ENCODE measurements at regions of chr12 and their contacts with region 1.

Region 1: GRCh38 chr12:121802846-121803630 is 771 bp upstream of the SETD1B start:
- DNase-seq: peak; percentile 93
- ATAC-seq: peak; percentile 63
- H3K4me3 ChIP-seq: peak overlapping the region; percentile 71 to 80 (median 79)
- H3K27ac ChIP-seq: peak overlapping the region; percentile 99
- H3K4me1 ChIP-seq: peaks cover 41% of the 10 kb centered on the region
- H3K27me3 ChIP-seq: no peaks in the 10 kb centered on the region; a peak in 1 of 5 replicates
- CTCF ChIP-seq: peak; percentile 17; the same call in 1 of the 2 replicates
- EP300 ChIP-seq: peak; percentile 13 to 25; a peak in 1 of 4 replicates
- POLR2A ChIP-seq: peak in 1 of 2 experiments; percentile 97; a peak in 2 of 4 replicates
- RAD21 ChIP-seq: no peak; the same call in 1 of the 2 replicates

Region 2: GRCh38 chr12:121781998-121782979 is 20.7 kb before region 1 on chr12:
- CTCF ChIA-PET with region 1: no interaction called
- POLR2A ChIA-PET with region 1: interaction called, 12 read pairs
- in situ Hi-C with region 1: no loop called
- intact Hi-C with region 1: no loop called
- DNase-seq: peak; percentile 68
- ATAC-seq: peak; percentile 60
- H3K4me3 ChIP-seq: peak overlapping the region in 1 of 3 experiments; percentile 37; a peak in 2 of 6 replicates
- H3K27ac ChIP-seq: peak overlapping the region; percentile 24
- H3K4me1 ChIP-seq: peaks cover 44% of the 10 kb centered on the region
- H3K27me3 ChIP-seq: no peaks in the 10 kb centered on the region; a peak in 1 of 5 replicates
- CTCF ChIP-seq: no peak
- EP300 ChIP-seq: peak in 1 of 2 experiments; percentile 28; a peak in 1 of 4 replicates
- POLR2A ChIP-seq: no peak
- RAD21 ChIP-seq: no peak

Region 3: GRCh38 chr12:121858662-121859572 is 55.9 kb after region 1 on chr12 and contains the start of gene HPD:
- CTCF ChIA-PET with region 1: no interaction called
- POLR2A ChIA-PET with region 1: interaction called, 25 read pairs
- in situ Hi-C with region 1: no loop called
- intact Hi-C with region 1: no loop called
- DNase-seq: peak; percentile 91
- ATAC-seq: peak; percentile 70
- H3K4me3 ChIP-seq: peak within 1 kb of the TSS; percentile 58 to 78 (median 60)
- H3K27ac ChIP-seq: peak within 1 kb of the TSS; percentile 100
- H3K4me1 ChIP-seq: peaks cover 76% of the 10 kb centered on the region
- H3K27me3 ChIP-seq: no peaks in the 10 kb centered on the region; a peak in 1 of 5 replicates
- CTCF ChIP-seq: peak; percentile 63
- EP300 ChIP-seq: peak in 1 of 2 experiments; percentile 33; a peak in 1 of 4 replicates
- POLR2A ChIP-seq: peak; percentile 73 to 83
- RAD21 ChIP-seq: peak; percentile 61
- total RNA-seq, gene HPD: 120 and 138 TPM in 2 replicates

Region 4: DNA sequence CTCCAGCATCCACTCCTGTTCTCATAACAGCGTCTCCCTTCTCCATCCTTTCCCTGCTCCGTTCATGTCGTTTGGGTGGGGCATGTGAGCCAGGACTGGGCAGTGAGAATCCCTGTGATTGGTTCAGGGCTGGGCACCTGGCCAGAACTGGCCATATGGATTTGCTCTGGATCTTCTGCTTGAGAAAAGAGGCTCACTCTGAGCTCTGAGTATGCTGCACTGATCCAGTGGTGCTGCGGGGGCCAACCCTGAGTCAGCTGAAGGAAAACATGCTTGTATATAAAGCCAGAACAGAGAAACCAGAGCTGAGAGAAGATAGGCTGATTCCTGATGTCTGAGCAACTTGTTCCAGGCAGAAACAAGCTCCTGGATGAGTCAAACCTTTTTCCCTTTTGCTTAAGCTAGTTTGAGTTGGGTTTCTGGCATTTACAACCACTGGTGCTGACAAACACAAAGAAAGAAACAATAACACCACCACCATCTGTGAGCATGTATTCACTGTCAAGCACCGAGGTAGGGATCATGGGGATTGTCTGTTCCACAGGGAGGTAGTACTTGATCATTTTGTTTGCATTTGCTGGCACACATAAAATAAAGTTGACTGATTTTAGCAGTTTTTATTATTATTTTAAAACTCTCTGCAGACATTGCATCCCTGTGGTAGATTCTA is 69.6 kb after region 1 on chr12:
- CTCF ChIA-PET with region 1: no interaction called
- POLR2A ChIA-PET with region 1: interaction called, 10 read pairs
- in situ Hi-C with region 1: no loop called
- intact Hi-C with region 1: no loop called
- DNase-seq: no peak
- ATAC-seq: no peak
- H3K4me3 ChIP-seq: no peak overlapping the region
- H3K27ac ChIP-seq: peak overlapping the region; percentile 26
- H3K4me1 ChIP-seq: peaks cover 29% of the 10 kb centered on the region
- H3K27me3 ChIP-seq: no peaks in the 10 kb centered on the region
- CTCF ChIP-seq: no peak
- EP300 ChIP-seq: no peak
- POLR2A ChIP-seq: no peak
- RAD21 ChIP-seq: no peak

Region 5: DNA sequence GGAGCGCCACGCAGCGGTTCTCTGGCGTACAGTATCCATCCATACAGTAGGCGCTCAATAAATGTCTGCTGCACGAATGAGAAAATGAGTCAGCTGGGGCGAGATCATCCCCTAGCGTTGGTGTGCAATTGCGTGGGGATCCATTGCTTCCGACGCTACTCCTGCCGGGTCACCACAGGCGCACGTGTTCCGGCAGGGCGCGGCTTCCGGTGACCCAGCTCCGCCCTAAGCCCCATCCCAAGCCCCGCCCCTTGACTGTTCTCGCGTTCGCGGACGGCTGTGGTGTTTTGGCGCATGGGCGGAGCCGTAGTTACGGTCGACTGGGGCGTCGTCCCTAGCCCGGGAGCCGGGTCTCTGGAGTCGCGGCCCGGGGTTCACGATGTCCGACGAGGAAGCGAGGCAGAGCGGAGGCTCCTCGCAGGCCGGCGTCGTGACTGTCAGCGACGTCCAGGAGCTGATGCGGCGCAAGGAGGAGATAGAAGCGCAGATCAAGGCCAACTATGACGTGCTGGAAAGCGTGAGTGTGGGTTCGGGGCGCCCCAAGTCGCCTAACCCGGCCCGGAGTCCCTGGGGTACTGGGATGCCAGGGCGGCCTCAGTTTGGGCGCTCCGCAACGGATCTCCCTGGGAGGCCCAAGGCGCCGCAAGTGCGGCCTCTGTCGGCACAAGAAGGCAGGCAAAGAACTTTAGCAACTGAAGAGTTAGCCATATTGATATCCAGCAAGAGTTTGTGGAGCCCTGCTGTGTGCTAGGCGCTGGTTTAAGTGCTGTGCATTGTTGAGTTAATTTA is 85.6 kb after region 1 on chr12 and contains the start of gene PSMD9:
- CTCF ChIA-PET with region 1: no interaction called
- POLR2A ChIA-PET with region 1: interaction called, 27 read pairs
- in situ Hi-C with region 1: no loop called
- intact Hi-C with region 1: no loop called
- DNase-seq: peak; percentile 92
- ATAC-seq: peak; percentile 96
- H3K4me3 ChIP-seq: peak within 1 kb of the TSS; percentile 71 to 87 (median 85)
- H3K27ac ChIP-seq: peak within 1 kb of the TSS; percentile 89
- H3K4me1 ChIP-seq: peaks cover 36% of the 10 kb centered on the region
- H3K27me3 ChIP-seq: no peaks in the 10 kb centered on the region; a peak in 1 of 5 replicates
- CTCF ChIP-seq: peak; percentile 94
- EP300 ChIP-seq: peak in 1 of 2 experiments; percentile 30; a peak in 1 of 4 replicates
- POLR2A ChIP-seq: peak; percentile 74 to 80
- RAD21 ChIP-seq: peak; percentile 83
- total RNA-seq, gene PSMD9: 61.1 and 73.9 TPM in 2 replicates

Region 6: GRCh38 chr12:121894633-121895032 is 91.6 kb after region 1 on chr12:
- CTCF ChIA-PET with region 1: no interaction called
- POLR2A ChIA-PET with region 1: interaction called, 27 read pairs
- in situ Hi-C with region 1: no loop called
- intact Hi-C with region 1: no loop called
- DNase-seq: peak; percentile 78
- ATAC-seq: peak; percentile 94
- H3K4me3 ChIP-seq: no peak overlapping the region
- H3K27ac ChIP-seq: peak overlapping the region; percentile 52
- H3K4me1 ChIP-seq: peaks cover 29% of the 10 kb centered on the region
- H3K27me3 ChIP-seq: no peaks in the 10 kb centered on the region
- CTCF ChIP-seq: peak; percentile 70
- EP300 ChIP-seq: no peak
- POLR2A ChIP-seq: no peak
- RAD21 ChIP-seq: 0 out of 2 replicates have a peak, but pooled peaks have one; percentile 47

Measured in HepG2 (cell line).